Heart left ventricle (tissue), 16 donors: ENCODE measurements at regions of chr20 and their contacts with region 1.

Region 1: GRCh38 chr20:354298-355064 is 7.6 kb downstream of the NRSN2 start:
- DNase-seq: peak; percentile 72 to 84 (median 72)
- ATAC-seq: peak; percentile 85 to 95 (median 90)
- H3K4me3 ChIP-seq: no peak overlapping the region
- H3K27ac ChIP-seq: no peak overlapping the region
- H3K4me1 ChIP-seq: peaks cover 0 to 8% (median 0%) of the 10 kb centered on the region in 12 donors
- H3K27me3 ChIP-seq: no peaks in the 10 kb centered on the region
- CTCF ChIP-seq: peak; percentile 93 to 98 (median 96)
- POLR2A ChIP-seq: no peak

Region 2: GRCh38 chr20:152131-152530 is 202.3 kb before region 1 on chr20:
- intact Hi-C with region 1: no loop called
- DNase-seq: no peak
- ATAC-seq: no peak
- H3K4me3 ChIP-seq: no peak overlapping the region
- H3K27ac ChIP-seq: no peak overlapping the region
- H3K4me1 ChIP-seq: no peaks in the 10 kb centered on the region
- H3K27me3 ChIP-seq: peaks cover 0 to 11% (median 0%) of the 10 kb centered on the region in 9 donors
- CTCF ChIP-seq: no peak
- POLR2A ChIP-seq: no peak

Region 3: GRCh38 chr20:313948-314347 is 40.5 kb before region 1 on chr20:
- intact Hi-C with region 1: no loop called
- DNase-seq: no peak
- ATAC-seq: no peak
- H3K4me3 ChIP-seq: no peak overlapping the region
- H3K27ac ChIP-seq: no peak overlapping the region
- H3K4me1 ChIP-seq: peaks cover 0 to 20% (median 14%) of the 10 kb centered on the region in 12 donors
- H3K27me3 ChIP-seq: no peaks in the 10 kb centered on the region
- CTCF ChIP-seq: no peak
- POLR2A ChIP-seq: no peak

Region 4: GRCh38 chr20:420641-421574 is 66.4 kb after region 1 on chr20:
- intact Hi-C with region 1: loop called in 1 of 10 experiments (anchors 10 kb)
- DNase-seq: peak in 2 of 5 donors; percentile 39 to 67
- ATAC-seq: peak in 2 of 4 donors; percentile 23 to 26
- H3K4me3 ChIP-seq: no peak overlapping the region
- H3K27ac ChIP-seq: no peak overlapping the region
- H3K4me1 ChIP-seq: peaks cover 0 to 5% (median 0%) of the 10 kb centered on the region in 12 donors
- H3K27me3 ChIP-seq: no peaks in the 10 kb centered on the region
- CTCF ChIP-seq: no peak
- POLR2A ChIP-seq: no peak

Region 5: GRCh38 chr20:478949-479429 is 124.5 kb after region 1 on chr20:
- intact Hi-C with region 1: loop called (anchors 1 to 2 kb)
- DNase-seq: peak in 1 of 5 donors; percentile 16
- ATAC-seq: peak in 2 of 4 donors; percentile 28 to 31
- H3K4me3 ChIP-seq: no peak overlapping the region
- H3K27ac ChIP-seq: no peak overlapping the region
- H3K4me1 ChIP-seq: peaks cover 0 to 21% (median 7%) of the 10 kb centered on the region in 12 donors
- H3K27me3 ChIP-seq: no peaks in the 10 kb centered on the region
- CTCF ChIP-seq: peak; percentile 41 to 75 (median 63)
- POLR2A ChIP-seq: no peak

Region 6: DNA sequence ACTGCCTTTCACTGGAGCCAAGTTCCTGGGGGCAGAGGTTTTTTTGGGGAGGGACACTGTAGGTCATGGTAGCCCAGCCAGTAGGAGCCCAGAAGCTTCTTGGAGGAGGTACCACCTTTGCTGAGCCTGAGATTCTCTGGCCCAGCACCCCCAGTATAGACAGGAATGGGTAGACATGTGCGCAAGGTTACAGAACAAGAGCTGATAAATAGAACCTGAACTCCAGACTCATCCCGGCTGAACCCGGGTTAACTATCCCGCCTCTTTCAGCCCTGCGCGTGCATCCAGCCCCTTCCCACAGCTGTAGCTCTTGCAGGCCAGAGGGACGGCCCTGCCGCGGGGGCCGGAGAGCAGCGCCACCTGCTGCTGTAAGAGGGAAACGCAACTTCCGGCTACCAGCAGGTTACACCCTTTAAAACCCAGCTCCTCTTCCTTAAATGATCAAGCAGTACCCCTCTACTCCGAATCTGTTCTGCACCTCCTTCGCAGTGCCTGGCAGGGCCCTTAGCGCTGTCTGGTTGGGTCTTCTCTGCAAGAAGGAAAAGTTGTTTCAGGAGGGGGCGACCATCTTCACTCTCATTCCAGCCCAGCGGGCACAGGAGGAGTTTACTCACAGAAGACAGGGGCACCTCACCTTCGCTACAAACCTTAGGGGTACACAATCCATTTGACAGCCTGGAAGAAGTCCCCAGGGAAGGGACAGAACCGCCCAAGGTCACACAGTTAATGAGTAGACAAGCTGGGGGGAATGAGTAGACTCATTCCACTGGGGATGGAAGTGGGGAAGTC is 291.0 kb after region 1 on chr20:
- intact Hi-C with region 1: loop called in 6 of 10 experiments (anchors 5 to 10 kb)
- DNase-seq: peak; percentile 68 to 89 (median 74)
- ATAC-seq: peak; percentile 63 to 85 (median 77)
- H3K4me3 ChIP-seq: no peak overlapping the region
- H3K27ac ChIP-seq: peak overlapping the region in 9 of 12 donors; percentile 15 to 65 (median 52)
- H3K4me1 ChIP-seq: peaks cover 0 to 40% (median 18%) of the 10 kb centered on the region in 12 donors
- H3K27me3 ChIP-seq: peaks cover 0 to 4% (median 0%) of the 10 kb centered on the region in 9 donors
- CTCF ChIP-seq: peak; percentile 93 to 98 (median 96)
- POLR2A ChIP-seq: no peak

Region 7: GRCh38 chr20:733861-734260 is 379.4 kb after region 1 on chr20:
- intact Hi-C with region 1: loop called in 8 of 10 experiments (anchors 5 to 10 kb)
- DNase-seq: no peak
- ATAC-seq: no peak
- H3K4me3 ChIP-seq: no peak overlapping the region
- H3K27ac ChIP-seq: no peak overlapping the region
- H3K4me1 ChIP-seq: peaks cover 0 to 2% (median 0%) of the 10 kb centered on the region in 12 donors
- H3K27me3 ChIP-seq: peaks cover 0 to 15% (median 5%) of the 10 kb centered on the region in 9 donors
- CTCF ChIP-seq: no peak
- POLR2A ChIP-seq: no peak